ENCODE measurements at regions of chr9 and their contacts with region 1.

Region 1: GRCh38 chr9:21802195-21803000 is at the start of gene MTAP:
- DNase-seq: peak; percentile 94 to 97 (median 96)
- ATAC-seq: peak; percentile 99
- H3K4me3 ChIP-seq: peak within 1 kb of the TSS; percentile 81
- H3K27ac ChIP-seq: peak within 1 kb of the TSS; percentile 72
- H3K4me1 ChIP-seq: no peaks in the 10 kb centered on the region
- H3K27me3 ChIP-seq: no peaks in the 10 kb centered on the region
- total RNA-seq, gene MTAP: 20.8 to 22.3 (median 22.2) TPM

Region 2: DNA sequence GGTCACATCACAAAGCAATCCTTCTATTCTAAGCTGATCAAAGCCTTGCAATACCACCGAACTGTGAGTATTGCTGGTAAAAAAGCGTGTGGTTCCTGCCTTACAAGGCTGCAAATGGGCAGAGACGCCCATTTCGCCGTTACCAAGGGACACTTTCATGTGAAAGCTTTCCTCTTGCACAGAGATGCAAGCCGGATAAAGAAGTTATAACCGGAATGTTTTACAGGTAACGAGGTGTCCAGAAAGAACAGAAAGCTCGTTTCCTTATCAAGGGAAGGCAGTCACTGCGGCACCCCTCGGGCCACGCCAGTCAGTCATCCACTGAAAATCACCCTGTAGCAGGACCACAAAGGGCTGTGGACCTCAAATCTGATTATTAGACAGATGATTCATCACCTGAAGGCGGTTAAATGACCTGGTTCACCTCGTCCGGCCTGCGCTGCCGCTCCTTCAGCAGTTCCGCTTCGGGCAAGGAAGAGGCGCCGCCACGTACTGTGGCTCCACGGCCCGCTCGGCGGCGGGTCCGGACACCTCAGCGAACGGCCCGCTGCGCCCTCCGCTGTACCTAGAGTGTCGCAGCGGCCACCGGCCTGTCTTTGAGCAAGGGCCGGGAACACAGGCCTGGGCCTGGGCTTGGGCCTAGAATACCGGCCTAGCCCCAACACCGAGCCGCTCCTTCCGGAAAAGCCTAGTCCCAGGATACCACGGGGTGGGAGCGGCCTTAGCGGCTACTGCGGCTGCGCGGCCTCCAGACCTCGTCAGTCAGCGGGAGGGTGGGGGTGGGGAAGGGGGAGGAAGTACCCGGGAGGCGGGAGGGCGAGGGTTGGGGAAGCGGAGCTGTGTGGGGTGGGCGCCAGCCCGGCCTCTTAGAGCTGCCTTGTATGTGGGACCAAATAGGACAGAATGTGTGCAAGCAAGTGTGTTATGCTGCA is 467.4 kb before region 1 on chr9 and contains the start of gene KLHL9:
- intact Hi-C with region 1: loop called in 1 of 4 experiments (anchors 10 kb)
- DNase-seq: peak; percentile 96 to 98 (median 97)
- ATAC-seq: peak; percentile 100
- H3K4me3 ChIP-seq: peak within 1 kb of the TSS; percentile 83
- H3K27ac ChIP-seq: peak within 1 kb of the TSS; percentile 72
- H3K4me1 ChIP-seq: peaks cover 12% of the 10 kb centered on the region
- H3K27me3 ChIP-seq: no peaks in the 10 kb centered on the region
- total RNA-seq, gene KLHL9: 13.0 to 14.6 (median 13.3) TPM

Region 3: DNA sequence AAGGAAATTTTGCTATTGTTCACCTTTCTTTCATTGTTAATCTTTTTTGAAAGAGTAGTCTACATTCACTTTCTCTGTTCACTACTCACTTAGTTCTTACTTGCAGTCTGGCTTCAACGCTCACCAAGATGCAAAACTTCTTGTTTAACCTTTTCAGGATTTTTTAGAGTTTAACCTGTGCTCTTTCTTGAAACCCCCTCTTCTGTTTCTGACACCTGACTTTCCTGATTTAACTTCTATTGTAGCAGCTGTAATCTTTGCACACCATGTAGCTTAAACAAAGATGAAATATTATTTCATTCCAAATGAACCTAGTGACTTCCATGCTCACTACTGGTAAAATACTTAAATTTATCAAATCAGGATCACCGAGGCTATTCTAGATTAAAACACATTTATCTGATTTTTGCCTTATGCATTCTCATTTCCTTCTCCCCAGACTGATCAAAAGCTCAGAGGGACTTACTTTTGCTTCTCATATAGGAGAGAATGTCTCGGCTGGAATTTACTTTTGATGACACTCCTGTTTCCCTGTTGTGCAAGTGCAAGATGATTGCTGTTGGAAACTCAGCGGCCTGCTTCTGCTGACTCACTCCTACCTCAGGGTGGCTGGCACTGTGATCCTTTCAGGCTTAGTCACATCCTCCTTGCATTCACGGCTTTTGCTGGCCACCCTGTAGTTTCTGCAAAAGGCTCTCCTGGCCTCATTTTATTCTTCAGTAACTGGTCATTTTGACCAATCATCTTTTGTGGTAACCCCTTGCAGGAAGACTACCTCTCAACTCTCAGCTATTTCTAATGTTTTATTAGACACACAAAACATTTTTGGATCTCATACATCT is 211.0 kb before region 1 on chr9:
- intact Hi-C with region 1: no loop called
- DNase-seq: peak in 2 of 3 donors; percentile 52 to 62
- ATAC-seq: peak; percentile 63 to 86
- H3K4me3 ChIP-seq: no peak overlapping the region
- H3K27ac ChIP-seq: no peak overlapping the region
- H3K4me1 ChIP-seq: no peaks in the 10 kb centered on the region
- H3K27me3 ChIP-seq: no peaks in the 10 kb centered on the region

Region 4: GRCh38 chr9:22008736-22009562 is 206.6 kb after region 1 on chr9 and contains the start of gene CDKN2B:
- intact Hi-C with region 1: loop called in 2 of 4 experiments (anchors 10 kb)
- DNase-seq: peak; percentile 98
- ATAC-seq: peak; percentile 100
- H3K4me3 ChIP-seq: peak within 1 kb of the TSS; percentile 61
- H3K27ac ChIP-seq: peak within 1 kb of the TSS; percentile 83
- H3K4me1 ChIP-seq: no peaks in the 10 kb centered on the region
- H3K27me3 ChIP-seq: no peaks in the 10 kb centered on the region
- total RNA-seq, gene CDKN2B: 0.71 to 1.7 (median 1.3) TPM

Measured in right cardiac atrium (tissue), 5 donors.